ENCODE measurements at regions of chr9 and their contacts with region 1.

Region 1: DNA sequence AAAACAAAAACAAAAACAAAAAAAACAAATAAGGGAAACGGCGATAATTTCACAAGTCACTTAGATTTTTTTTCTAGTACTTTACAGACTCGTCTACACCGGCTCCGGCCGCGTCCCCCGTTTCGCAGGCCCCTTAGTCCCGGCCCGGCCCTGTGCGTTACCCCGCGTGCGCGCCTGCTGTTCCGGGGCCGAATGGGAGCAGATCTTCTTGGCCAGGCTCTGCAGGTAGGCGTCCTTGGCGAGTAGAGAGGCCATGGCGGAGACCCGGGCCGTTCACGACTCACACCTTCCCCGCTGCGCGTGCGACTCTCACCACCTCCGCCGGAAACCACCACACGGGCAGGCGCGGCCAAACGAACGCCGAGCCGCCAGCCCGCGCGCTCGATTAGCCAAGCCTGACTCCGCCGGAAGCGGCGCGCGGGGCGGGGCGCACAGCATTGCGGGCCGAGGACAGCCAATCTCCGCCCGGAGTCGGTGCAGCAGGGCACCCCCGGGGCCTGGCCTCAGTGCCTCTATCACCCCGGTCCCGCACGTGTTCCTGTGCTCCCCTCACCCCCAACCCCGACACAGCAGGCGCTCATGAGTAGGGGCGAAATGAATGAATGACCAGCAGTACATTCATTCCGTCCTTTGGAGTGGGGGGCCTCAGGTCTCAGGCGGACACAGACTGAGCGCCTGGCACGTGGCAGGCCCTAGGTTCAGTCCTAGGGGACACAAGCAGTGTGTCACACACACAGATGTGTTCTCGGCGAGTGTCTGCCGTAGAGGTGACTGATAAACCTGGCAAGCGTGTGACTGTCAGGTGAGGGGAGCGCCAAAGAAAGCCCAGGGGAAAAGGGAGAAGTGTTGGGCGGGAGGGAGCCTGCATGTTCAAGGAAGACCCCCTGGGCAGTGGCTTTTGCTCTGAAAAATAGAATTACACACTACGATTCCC is at the start of gene SURF6:
- DNase-seq: peak; percentile 97
- ATAC-seq: peak; percentile 96
- H3K4me3 Mint-ChIP-seq: peak within 1 kb of the TSS; percentile 86
- H3K27ac Mint-ChIP-seq: peak within 1 kb of the TSS; percentile 89
- H3K4me1 Mint-ChIP-seq: peaks cover 23% of the 10 kb centered on the region
- H3K27me3 Mint-ChIP-seq: no peaks in the 10 kb centered on the region
- total RNA-seq, gene SURF6: 22.4 to 24.3 TPM

Region 2: DNA sequence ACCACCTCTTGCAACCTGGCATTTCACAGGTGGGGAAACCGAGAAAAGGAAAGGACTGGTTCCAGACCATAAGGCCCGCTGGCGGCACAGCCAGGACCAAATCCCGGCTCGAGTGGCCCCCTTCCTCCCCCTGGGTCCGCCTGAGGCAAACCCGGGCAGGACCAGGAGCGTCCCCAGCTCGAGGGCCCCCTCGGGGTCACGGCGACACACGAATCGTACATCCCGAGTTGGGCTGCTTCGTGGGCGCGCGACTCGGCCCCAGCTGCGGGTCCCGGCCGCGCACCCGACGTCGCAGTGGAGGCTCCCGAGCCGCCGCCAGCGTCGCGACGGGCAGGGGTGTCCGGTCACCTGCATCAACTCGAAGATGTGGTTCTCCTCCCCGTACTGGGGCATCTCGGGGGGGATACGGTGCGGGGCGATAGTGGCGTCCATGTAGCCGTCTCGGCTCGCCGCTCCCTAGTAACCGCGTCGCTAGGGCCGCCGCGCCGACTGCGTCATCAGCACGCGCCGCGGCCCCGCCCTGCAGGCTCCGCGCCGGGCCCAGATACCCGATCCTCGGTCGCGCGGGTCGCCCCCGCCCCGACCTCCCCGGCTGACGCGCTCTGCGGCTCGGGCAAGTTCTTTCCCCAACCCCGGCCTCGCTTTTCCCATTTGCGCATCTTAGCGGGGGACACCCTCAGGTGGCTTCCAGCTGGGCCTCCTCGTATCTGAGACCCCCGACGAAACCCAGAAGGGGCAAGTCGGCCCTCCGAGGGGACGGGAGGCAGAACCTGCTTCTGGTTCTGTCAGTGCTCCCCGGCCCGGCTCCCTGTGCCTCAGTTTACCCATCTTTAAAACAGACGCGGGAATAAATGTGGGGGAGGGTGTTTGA is 458.1 kb before region 1 on chr9 and contains the start of gene AK8:
- CTCF ChIA-PET with region 1: no interaction called
- POLR2A ChIA-PET with region 1: no interaction called
- intact Hi-C with region 1: loop called in 1 of 2 experiments (anchors 5 kb)
- DNase-seq: peak; percentile 86
- ATAC-seq: peak; percentile 76
- H3K4me3 Mint-ChIP-seq: peak within 1 kb of the TSS; percentile 73
- H3K27ac Mint-ChIP-seq: peak within 1 kb of the TSS; percentile 13
- H3K4me1 Mint-ChIP-seq: peaks cover 21% of the 10 kb centered on the region
- H3K27me3 Mint-ChIP-seq: no peaks in the 10 kb centered on the region
- total RNA-seq, gene AK8: 0.21 TPM in 1 of 2 experiments, not detected in the other

Region 3: GRCh38 chr9:133184962-133185361 is 151.2 kb before region 1 on chr9:
- CTCF ChIA-PET with region 1: interaction called, 18 read pairs
- POLR2A ChIA-PET with region 1: no interaction called
- intact Hi-C with region 1: loop called (anchors 2 to 10 kb)
- DNase-seq: peak; percentile 70
- ATAC-seq: peak; percentile 54
- H3K4me3 Mint-ChIP-seq: no peak overlapping the region
- H3K27ac Mint-ChIP-seq: no peak overlapping the region
- H3K4me1 Mint-ChIP-seq: peaks cover 23% of the 10 kb centered on the region
- H3K27me3 Mint-ChIP-seq: peaks cover 14% of the 10 kb centered on the region

Region 4: GRCh38 chr9:133347985-133348717 is 12.0 kb after region 1 on chr9 and contains the starts of genes MED22 and RPL7A:
- CTCF ChIA-PET with region 1: interaction called, 5 read pairs
- POLR2A ChIA-PET with region 1: interaction called, 7 read pairs
- intact Hi-C with region 1: loop called (anchors 1 kb)
- DNase-seq: peak; percentile 96
- ATAC-seq: peak; percentile 83
- H3K4me3 Mint-ChIP-seq: peak within 1 kb of the TSS; percentile 97
- H3K27ac Mint-ChIP-seq: peak within 1 kb of the TSS; percentile 97
- H3K4me1 Mint-ChIP-seq: peaks cover 36% of the 10 kb centered on the region
- H3K27me3 Mint-ChIP-seq: no peaks in the 10 kb centered on the region
- total RNA-seq, gene MED22: 22.9 to 26.4 TPM
- total RNA-seq, gene RPL7A: 3,179 to 3,246 TPM

Region 5: GRCh38 chr9:133459476-133460404 is 123.6 kb after region 1 on chr9 and contains the start of gene CACFD1:
- CTCF ChIA-PET with region 1: no interaction called
- POLR2A ChIA-PET with region 1: no interaction called
- intact Hi-C with region 1: loop called in 1 of 2 experiments (anchors 1 kb)
- DNase-seq: peak; percentile 96
- ATAC-seq: peak; percentile 88
- H3K4me3 Mint-ChIP-seq: peak within 1 kb of the TSS; percentile 74
- H3K27ac Mint-ChIP-seq: peak within 1 kb of the TSS; percentile 42
- H3K4me1 Mint-ChIP-seq: no peaks in the 10 kb centered on the region
- H3K27me3 Mint-ChIP-seq: no peaks in the 10 kb centered on the region
- total RNA-seq, gene CACFD1: 0.87 to 0.90 TPM

Region 6: GRCh38 chr9:134024828-134025605 is 688.9 kb after region 1 on chr9 and contains the start of gene BRD3OS:
- CTCF ChIA-PET with region 1: no interaction called
- POLR2A ChIA-PET with region 1: no interaction called
- intact Hi-C with region 1: loop called in 1 of 2 experiments (anchors 1 kb)
- DNase-seq: peak; percentile 96
- ATAC-seq: peak; percentile 91
- H3K4me3 Mint-ChIP-seq: peak within 1 kb of the TSS; percentile 74
- H3K27ac Mint-ChIP-seq: no peak within 1 kb of the TSS
- H3K4me1 Mint-ChIP-seq: peaks cover 4% of the 10 kb centered on the region
- H3K27me3 Mint-ChIP-seq: no peaks in the 10 kb centered on the region
- total RNA-seq, gene BRD3OS: 15.1 to 18.0 TPM

Measured in activated CD4-positive, alpha-beta T cell treated with anti-CD3 and anti-CD28 coated beads for 36 hours (primary cell).